Left lung (tissue), 14 donors: ENCODE measurements at regions of chr14 and their contacts with region 1.

Region 1: DNA sequence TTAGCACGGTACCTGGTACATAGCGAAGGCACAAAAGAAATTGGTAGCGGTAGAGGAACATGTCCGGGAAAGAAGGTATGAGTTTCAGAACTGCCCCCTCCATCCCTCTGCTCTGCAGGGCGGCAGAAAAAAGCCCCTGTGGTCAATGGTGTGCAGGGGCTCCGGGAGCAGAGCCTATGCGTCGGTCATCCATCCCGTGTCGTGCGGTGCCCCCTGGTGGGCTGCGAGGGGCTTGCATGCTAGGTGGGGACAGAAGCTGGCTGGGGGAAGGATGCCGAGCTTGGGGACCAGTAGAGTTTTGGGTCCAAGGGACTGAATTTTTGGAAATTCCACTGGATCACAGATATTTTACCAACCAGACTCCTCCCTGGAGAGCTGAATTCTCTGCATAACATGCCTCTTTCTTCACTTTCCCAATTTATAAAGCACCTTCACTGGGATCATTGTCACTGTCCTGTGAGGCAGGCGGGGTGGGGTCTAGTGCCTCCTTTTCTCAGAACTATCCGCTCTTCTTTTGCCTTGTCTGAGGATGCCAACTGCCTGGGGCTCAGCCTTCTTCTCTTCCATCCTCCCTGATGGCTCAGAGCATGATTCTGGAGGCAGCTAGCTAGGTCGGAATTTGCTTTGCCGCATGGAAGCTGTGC is 148.7 kb downstream of the SMOC1 start:
- DNase-seq: peak; percentile 37 to 88 (median 64)
- ATAC-seq: peak; percentile 93
- H3K4me3 ChIP-seq: no peak overlapping the region
- H3K27ac ChIP-seq: no peak overlapping the region
- H3K4me1 ChIP-seq: no peaks in the 10 kb centered on the region
- H3K27me3 ChIP-seq: peaks cover 0 to 31% of the 10 kb centered on the region in 2 donors
- CTCF ChIP-seq: peak; percentile 86 to 92

Region 2: DNA sequence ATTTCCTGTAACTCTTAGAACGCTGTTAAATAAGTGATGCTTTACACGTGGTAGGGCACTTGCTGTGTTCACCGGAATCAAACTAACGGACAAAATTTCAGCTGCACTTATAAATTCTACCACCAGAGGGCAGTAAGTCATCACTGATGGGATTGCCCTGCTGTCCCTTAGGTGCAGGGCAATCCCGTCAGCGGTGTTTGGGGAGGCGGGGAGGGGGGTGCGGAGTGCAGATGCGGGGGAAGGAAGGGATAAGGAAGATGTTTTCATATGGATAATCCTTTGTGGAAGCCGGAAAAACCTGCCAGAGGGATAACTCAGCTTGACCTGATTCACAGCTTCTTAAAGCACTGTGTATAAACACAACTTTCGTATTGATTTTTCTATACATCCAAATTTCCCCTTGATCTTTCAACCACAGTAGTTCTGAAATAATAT is 209.1 kb before region 1 on chr14:
- intact Hi-C with region 1: loop called (anchors 5 to 10 kb)
- DNase-seq: peak in 2 of 4 donors; percentile 59 to 64
- ATAC-seq: peak; percentile 89
- H3K4me3 ChIP-seq: no peak overlapping the region
- H3K27ac ChIP-seq: no peak overlapping the region
- H3K4me1 ChIP-seq: no peaks in the 10 kb centered on the region
- H3K27me3 ChIP-seq: peaks cover 0 to 32% of the 10 kb centered on the region in 2 donors
- CTCF ChIP-seq: peak; percentile 68 to 80

Region 3: DNA sequence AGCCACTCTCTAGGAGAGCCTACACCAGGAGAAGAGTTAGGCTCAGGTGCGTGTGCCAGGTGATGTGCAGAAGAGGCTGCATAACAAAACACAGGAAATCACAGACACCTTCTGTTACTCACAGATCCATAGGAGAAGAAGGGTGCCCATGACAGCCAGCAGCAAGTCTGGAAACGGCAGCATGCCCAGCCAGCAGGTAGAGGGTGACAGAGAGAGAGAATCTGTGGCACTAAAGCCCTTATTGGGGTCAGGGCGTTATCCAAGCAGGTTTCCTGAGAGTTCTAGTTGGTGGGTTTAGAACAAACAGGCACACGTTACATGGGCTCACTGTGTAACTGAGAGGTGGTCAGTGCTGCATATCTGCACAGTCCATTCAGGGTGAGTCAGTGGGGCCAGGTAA is 175.8 kb after region 1 on chr14:
- intact Hi-C with region 1: no loop called
- DNase-seq: no peak
- ATAC-seq: no peak
- H3K4me3 ChIP-seq: no peak overlapping the region
- H3K27ac ChIP-seq: no peak overlapping the region
- H3K4me1 ChIP-seq: no peaks in the 10 kb centered on the region
- H3K27me3 ChIP-seq: peaks cover 7 to 48% of the 10 kb centered on the region in 2 donors
- CTCF ChIP-seq: no peak